OCI-LY7 (cell line): ENCODE measurements at regions of chr11 and their contacts with region 1.

Region 1: DNA sequence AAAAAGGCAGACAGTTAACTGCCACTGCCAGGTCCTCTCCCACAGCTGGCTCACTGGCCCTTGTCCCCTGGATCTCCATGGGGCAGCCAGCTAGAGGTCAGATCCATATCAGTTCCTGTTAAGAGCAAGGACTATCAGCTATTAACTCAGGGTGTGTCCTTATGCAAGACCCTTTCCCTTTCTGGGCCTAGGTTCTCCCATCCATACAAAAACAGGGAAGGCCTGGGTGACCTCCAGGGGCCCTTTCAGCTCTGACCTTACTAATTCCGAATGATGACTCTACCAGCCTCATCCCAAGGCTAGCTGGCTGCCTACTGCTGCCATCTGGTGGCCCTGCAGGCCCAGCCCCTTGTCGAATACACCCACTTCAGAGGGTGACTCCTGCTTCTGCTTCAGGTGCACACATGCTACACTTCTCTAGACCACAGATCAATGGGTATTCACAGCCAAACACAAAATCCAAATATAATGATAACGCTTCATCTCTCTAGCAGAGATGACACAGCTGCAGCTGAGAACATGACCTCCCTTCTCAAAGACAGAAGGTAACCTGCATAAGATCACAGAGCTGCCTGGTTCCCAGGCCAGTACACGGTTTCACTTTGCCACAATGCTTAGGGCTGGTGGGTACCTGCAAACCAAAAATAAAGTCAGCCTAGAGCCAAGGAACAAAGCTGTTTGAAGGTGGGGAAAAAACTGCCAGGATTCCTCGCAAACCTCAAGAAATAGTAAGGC is 34.1 kb downstream of the SERGEF start:
- DNase-seq: peak; percentile 26
- H3K4me3 ChIP-seq: no peak overlapping the region
- H3K27ac ChIP-seq: no peak overlapping the region
- H3K4me1 ChIP-seq: no peaks in the 10 kb centered on the region
- CTCF ChIP-seq: peak; percentile 79

Region 2: DNA sequence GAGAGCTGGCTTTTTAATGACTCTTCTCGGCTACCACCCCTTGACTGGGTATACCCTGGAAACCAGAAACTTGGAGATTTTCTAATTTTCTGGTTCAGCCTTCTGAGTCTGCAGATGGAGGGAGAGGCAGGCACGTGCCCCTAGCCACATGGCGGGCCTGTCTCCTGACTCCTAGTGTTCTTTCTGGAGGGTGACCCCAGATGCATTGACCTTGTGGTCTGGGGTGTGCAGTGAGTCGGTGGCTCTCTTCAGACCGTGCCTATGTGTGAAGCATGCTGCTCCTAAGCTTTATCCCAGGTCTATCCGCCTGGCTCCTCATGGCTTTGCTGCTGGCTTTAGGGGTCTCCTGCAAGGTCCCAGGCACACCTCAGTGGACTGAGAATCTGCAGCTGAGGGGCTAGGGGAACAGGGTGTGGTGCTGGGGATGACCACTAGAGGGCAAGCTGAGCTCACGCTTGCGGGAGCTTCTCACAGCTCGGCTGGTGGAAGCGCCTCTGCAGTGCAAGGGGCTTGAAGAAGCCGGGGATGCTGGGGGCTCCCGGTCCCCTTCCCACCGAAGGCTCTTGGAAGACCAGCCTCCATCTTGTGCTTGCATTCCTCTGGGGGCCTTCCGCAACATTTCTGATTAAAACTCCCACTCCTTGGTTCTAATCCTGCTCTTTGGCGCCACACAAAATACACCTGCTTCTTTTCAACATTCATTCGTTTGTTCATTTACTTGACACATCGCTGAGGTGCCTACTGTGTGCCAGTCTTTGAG is 379.8 kb before region 1 on chr11:
- CTCF ChIA-PET with region 1: no interaction called
- POLR2A ChIA-PET with region 1: no interaction called
- intact Hi-C with region 1: loop called (anchors 1 kb)
- DNase-seq: peak; percentile 75
- H3K4me3 ChIP-seq: no peak overlapping the region
- H3K27ac ChIP-seq: no peak overlapping the region
- H3K4me1 ChIP-seq: no peaks in the 10 kb centered on the region
- CTCF ChIP-seq: peak; percentile 91

Region 3: GRCh38 chr11:17730608-17731462 is 247.9 kb before region 1 on chr11:
- CTCF ChIA-PET with region 1: interaction called, 14 read pairs
- POLR2A ChIA-PET with region 1: interaction called, 3 read pairs
- intact Hi-C with region 1: loop called (anchors 1 kb)
- DNase-seq: peak; percentile 59
- H3K4me3 ChIP-seq: no peak overlapping the region
- H3K27ac ChIP-seq: no peak overlapping the region
- H3K4me1 ChIP-seq: no peaks in the 10 kb centered on the region
- CTCF ChIP-seq: peak; percentile 81

Region 4: DNA sequence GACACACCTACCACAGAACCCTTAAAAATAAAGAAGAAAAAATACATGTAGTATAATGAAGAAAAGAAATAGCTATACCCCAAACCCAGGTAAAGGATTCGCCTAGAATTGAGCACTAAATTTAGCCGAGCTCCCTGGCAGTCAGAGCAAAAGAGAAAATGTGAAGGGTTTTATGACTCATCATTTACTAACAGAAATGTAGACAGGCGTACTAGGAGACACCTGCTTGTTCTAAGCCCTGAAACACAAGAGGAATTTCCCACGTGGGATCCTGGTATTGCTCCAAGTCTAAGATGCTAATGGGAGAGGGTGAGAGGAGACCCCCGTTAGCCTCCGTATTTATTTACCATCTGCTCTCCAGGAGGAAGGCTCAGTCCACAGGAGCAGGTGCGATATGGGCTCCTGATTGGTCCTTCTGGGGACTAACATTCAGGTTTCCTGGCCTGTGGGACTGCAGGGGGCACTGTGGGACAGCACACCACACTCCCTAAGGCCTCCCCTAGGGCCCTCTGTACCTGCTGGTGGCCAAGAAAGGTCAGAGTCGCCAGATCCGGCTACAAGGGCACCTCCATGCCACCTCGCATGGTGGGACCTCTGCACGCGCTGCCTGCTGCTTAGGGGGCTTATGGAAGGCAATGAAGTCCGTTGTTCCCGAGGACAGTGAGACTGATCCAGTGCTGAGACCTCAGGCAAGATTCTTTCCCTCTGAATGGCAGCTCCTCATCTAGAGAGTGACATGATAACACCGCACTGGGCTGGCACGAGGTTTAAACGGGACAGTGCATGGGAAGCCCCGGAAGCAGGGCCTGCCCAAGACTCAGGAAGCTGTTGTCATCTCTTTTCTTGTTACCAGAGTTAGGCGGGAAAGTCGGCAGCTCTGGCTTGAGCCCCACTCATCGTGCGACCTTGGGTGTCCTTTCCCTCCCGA is 218.4 kb before region 1 on chr11:
- CTCF ChIA-PET with region 1: no interaction called
- POLR2A ChIA-PET with region 1: no interaction called
- intact Hi-C with region 1: loop called (anchors 1 kb)
- DNase-seq: peak; percentile 48
- H3K4me3 ChIP-seq: no peak overlapping the region
- H3K27ac ChIP-seq: no peak overlapping the region
- H3K4me1 ChIP-seq: no peaks in the 10 kb centered on the region
- CTCF ChIP-seq: peak; percentile 69

Region 5: GRCh38 chr11:18594999-18595749 is 616.5 kb after region 1 on chr11:
- CTCF ChIA-PET with region 1: no interaction called
- POLR2A ChIA-PET with region 1: no interaction called
- intact Hi-C with region 1: no loop called
- DNase-seq: no peak
- H3K4me3 ChIP-seq: no peak overlapping the region
- H3K27ac ChIP-seq: no peak overlapping the region
- H3K4me1 ChIP-seq: no peaks in the 10 kb centered on the region
- CTCF ChIP-seq: no peak